A549 (cell line): ENCODE measurements at regions of chr2 and their contacts with region 1.

Region 1: DNA sequence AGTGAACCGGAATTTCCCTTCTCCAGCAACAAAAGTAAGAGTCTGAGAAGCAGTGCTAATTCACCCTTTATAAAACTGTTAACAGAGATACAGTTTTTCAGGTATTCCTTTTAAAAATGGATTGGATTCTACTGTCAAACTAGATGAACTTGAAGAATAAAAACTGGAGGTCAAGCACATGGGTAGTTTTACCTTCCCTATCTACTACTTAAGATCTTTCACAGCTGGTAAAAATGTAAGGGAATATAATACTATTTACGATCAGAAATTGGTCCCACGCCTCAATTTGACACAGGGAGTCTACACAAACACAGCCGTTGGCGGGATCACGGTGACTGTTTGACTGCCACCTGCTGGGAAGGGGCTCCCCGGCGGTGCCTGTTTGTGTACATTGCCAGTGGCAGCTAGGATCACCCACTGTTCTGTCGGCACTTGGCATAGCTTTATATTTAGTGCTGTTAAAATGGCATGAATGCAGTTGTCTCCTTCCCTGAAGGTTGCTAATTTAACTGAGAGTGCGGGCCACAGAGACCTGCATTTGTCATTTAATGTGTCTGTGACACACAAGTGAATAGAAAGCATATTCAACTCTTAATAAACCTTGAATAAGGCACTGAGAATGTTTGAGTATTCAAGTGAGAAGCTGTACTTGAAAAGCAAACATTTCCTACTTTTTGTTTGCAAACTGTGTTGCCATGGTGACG is 59.5 kb downstream of the ABCG8 start:
- DNase-seq: peak; percentile 64 to 76
- ATAC-seq: peak; percentile 90 to 94
- H3K4me3 ChIP-seq: no peak overlapping the region
- H3K27ac ChIP-seq: 0 out of 6 replicates have a peak overlapping the region, but pooled peaks of 1 of the 2 experiments have one; percentile 1
- H3K4me1 ChIP-seq: peaks cover 28% of the 10 kb centered on the region
- CTCF ChIP-seq: peak; percentile 61
- EP300 ChIP-seq: no peak
- POLR2A ChIP-seq: no peak
- RAD21 ChIP-seq: peak in 1 of 2 experiments; percentile 47; a peak in 3 of 5 replicates

Region 2: GRCh38 chr2:43884651-43885050 is 13.6 kb before region 1 on chr2:
- CTCF ChIA-PET with region 1: interaction called, 12 read pairs
- POLR2A ChIA-PET with region 1: interaction called, 3 read pairs
- DNase-seq: no peak
- ATAC-seq: no peak
- H3K4me3 ChIP-seq: no peak overlapping the region
- H3K27ac ChIP-seq: no peak overlapping the region
- H3K4me1 ChIP-seq: peaks cover 16% of the 10 kb centered on the region
- CTCF ChIP-seq: no peak
- EP300 ChIP-seq: no peak
- POLR2A ChIP-seq: no peak
- RAD21 ChIP-seq: no peak

Region 3: GRCh38 chr2:44061876-44062275 is 163.6 kb after region 1 on chr2:
- CTCF ChIA-PET with region 1: no interaction called
- POLR2A ChIA-PET with region 1: no interaction called
- DNase-seq: peak in 1 of 2 experiments; percentile 26
- ATAC-seq: peak; percentile 69 to 73; a peak in 4 of 6 replicates
- H3K4me3 ChIP-seq: no peak overlapping the region
- H3K27ac ChIP-seq: peak overlapping the region; percentile 23 to 57; a peak in 1 of 6 replicates
- H3K4me1 ChIP-seq: peaks cover 24% of the 10 kb centered on the region
- CTCF ChIP-seq: no peak
- EP300 ChIP-seq: no peak
- POLR2A ChIP-seq: no peak
- RAD21 ChIP-seq: no peak